ENCODE measurements at regions of chr6 and their contacts with region 1.

Region 1: GRCh38 chr6:154675602-154676088 is 57.6 kb upstream of the SCAF8 start:
- DNase-seq: peak in 3 of 4 donors; percentile 80 to 97 (median 93)
- ATAC-seq: peak; percentile 100
- H3K4me3 ChIP-seq: no peak overlapping the region
- H3K27ac ChIP-seq: no peak overlapping the region
- H3K4me1 ChIP-seq: no peaks in the 10 kb centered on the region
- H3K27me3 ChIP-seq: no peaks in the 10 kb centered on the region
- CTCF ChIP-seq: peak; percentile 95 to 99

Region 2: DNA sequence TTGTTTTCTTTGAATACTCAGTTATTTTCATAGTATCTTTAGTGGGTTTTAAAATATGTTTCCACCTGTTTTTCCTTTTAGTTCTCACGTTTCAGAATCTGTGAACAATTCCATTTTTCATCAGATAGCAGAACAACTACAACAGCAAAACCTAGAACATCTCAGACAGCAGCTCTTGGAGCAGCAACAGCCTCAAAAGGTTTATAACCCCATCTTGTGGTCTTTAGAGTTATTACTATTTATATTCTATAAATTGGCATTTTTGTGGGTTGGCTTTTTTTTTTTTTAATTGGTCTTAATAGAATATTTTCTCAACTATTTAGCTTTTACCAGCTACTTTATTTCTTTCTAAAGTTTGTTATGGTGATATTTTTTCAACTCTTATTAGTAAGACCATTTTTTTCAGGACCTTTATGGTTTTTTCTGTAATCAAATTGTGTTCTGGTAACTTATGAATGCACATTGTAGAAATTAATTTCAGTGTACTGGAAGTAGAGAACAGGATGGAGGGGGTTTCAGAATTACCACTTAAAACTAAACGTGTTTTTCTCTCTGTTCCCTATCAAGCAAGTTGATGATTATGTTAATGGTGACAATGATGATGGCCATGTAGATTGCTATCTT is 129.8 kb after region 1 on chr6:
- intact Hi-C with region 1: loop called in 1 of 2 experiments (anchors 10 kb)
- DNase-seq: peak in 1 of 4 donors; percentile 34
- ATAC-seq: peak; percentile 57
- H3K4me3 ChIP-seq: no peak overlapping the region
- H3K27ac ChIP-seq: no peak overlapping the region
- H3K4me1 ChIP-seq: no peaks in the 10 kb centered on the region
- H3K27me3 ChIP-seq: no peaks in the 10 kb centered on the region
- CTCF ChIP-seq: no peak

Measured in left lung (tissue), 14 donors.